Lower leg skin (tissue), 4 donors: ENCODE measurements at regions of chr12 and their contacts with region 1.

Region 1: GRCh38 chr12:115983226-115983798 is 294.2 kb downstream of the MED13L start:
- DNase-seq: no peak
- H3K4me3 ChIP-seq: no peak overlapping the region
- CTCF ChIP-seq: no peak
- POLR2A ChIP-seq: no peak

Region 2: GRCh38 chr12:116959845-116960514 is 976.7 kb after region 1 on chr12:
- intact Hi-C with region 1: loop called (anchors 5 kb)
- DNase-seq: no peak
- H3K4me3 ChIP-seq: no peak overlapping the region
- CTCF ChIP-seq: no peak
- POLR2A ChIP-seq: no peak